ENCODE measurements at regions of chr1 and their contacts with region 1.

Region 1: DNA sequence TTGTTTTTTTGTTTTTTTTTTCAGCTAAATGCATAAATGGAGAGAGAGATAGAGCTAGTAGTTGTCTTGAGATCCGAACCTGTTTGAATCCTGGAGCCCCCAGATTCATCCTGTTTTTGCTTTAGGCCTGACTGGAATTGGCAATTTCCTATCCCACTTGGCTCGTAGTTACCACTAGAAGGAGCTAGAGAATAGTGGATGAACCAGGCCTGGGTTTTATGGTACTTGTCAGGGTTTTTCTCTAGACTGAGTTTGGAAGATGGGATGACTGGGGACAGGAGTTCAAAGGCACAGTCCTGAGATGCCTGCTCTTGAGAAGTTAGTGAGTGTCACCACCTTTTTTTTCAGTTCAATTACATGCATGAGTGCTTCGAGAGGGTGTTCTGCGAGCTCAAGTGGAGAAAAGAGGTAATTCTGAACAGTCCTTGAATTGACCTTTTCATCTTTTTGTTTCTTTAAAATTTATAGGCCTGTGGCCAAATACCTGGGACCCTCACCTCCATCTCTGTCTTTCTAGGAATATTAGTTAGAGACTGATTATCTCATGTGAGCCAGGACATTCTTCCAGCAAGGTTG is 23.4 kb downstream of the CELF3 start:
- DNase-seq: no peak
- H3K4me3 ChIP-seq: no peak overlapping the region
- CTCF ChIP-seq: peak; percentile 65

Region 2: DNA sequence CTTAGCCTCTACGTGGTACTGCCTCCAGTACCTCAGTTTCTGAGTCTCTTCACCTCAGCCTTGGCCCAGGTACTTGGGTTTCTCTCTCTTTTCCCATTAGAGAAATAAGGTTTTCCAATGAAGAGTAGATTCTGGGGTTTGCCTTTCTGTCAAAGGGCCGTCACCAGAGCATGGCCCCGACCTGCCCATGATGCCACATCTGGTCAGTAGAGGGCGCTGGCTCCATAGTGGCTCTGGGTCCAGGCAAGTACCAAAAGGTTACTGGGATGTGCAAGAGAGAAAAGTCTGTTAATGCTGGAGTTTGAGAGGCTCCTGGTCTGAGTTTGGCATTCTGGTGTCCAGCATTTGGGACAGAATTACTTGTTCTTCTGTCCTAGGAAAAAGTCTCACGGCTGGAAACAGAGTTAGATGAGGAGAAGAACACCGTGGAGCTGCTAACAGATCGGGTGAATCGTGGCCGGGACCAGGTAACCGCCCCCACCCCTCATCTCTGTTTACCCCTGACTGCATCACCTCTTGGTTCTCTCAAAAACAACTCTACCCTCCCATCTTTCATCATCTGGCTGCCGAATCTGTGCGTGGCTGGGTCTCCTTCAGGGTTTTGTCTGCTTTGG is 158.4 kb before region 1 on chr1:
- CTCF ChIA-PET with region 1: interaction called, 10 read pairs
- POLR2A ChIA-PET with region 1: no interaction called
- DNase-seq: no peak
- H3K4me3 ChIP-seq: no peak overlapping the region
- CTCF ChIP-seq: peak; percentile 94

Region 3: GRCh38 chr1:151680812-151681211 is 12.4 kb before region 1 on chr1:
- CTCF ChIA-PET with region 1: interaction called, 21 read pairs
- POLR2A ChIA-PET with region 1: no interaction called
- DNase-seq: peak; percentile 62
- H3K4me3 ChIP-seq: no peak overlapping the region
- CTCF ChIP-seq: no peak

Region 4: DNA sequence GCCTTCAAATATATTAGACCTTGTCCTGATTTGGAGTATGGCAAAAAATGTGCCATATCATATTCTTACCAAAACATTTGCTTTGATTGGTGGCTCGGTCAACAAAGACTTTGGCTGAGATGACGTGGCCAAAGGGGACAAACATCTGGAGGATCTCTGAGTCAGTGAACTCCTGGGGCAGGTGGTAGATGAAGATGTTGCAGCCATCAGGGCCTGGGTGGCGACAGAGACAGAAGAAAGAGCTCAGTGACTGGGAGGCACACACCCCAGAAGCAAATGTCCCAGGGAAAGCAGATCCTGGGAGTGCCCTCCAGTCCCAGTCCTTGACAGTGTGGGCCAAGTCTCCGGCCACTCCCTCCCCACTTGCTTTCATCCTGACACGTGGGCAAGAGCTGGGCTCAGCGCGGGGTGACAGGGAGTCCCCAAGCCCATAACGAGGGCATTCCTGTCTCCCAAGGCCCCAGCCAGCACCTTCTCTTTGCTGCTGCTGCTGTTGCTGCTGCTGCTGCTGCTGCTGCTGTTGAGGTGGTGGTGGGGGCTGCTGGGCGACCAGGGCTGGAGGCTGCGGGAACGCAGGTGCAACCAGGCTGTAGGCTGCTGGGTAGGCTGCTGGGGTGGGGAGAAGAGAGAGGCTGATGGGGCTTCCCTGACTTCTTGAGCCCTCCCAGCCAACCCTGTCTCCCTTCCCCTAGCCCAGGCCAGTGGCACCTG is 12.7 kb after region 1 on chr1:
- CTCF ChIA-PET with region 1: interaction called, 19 read pairs
- POLR2A ChIA-PET with region 1: no interaction called
- DNase-seq: no peak
- H3K4me3 ChIP-seq: no peak overlapping the region
- CTCF ChIP-seq: no peak

Region 5: GRCh38 chr1:151720974-151721787 is 28.0 kb after region 1 on chr1 and contains the start of gene RIIAD1:
- CTCF ChIA-PET with region 1: interaction called, 13 read pairs
- POLR2A ChIA-PET with region 1: no interaction called
- DNase-seq: no peak
- H3K4me3 ChIP-seq: peak within 1 kb of the TSS; percentile 47
- CTCF ChIP-seq: no peak

Measured in AG04449 (cell line).